ENCODE measurements at regions of chr12 and their contacts with region 1.

Region 1: GRCh38 chr12:44015335-44015941 is 179.6 kb downstream of the TMEM117 start:
- DNase-seq: no peak
- H3K4me3 Mint-ChIP-seq: no peak overlapping the region
- H3K27ac Mint-ChIP-seq: no peak overlapping the region
- H3K4me1 Mint-ChIP-seq: no peaks in the 10 kb centered on the region
- H3K27me3 Mint-ChIP-seq: no peaks in the 10 kb centered on the region

Region 2: GRCh38 chr12:42552822-42553221 is 1462.6 kb before region 1 on chr12:
- CTCF ChIA-PET with region 1: no interaction called
- intact Hi-C with region 1: no loop called
- DNase-seq: no peak
- H3K4me3 Mint-ChIP-seq: no peak overlapping the region
- H3K27ac Mint-ChIP-seq: no peak overlapping the region
- H3K4me1 Mint-ChIP-seq: no peaks in the 10 kb centered on the region
- H3K27me3 Mint-ChIP-seq: peaks cover 8% of the 10 kb centered on the region

Region 3: DNA sequence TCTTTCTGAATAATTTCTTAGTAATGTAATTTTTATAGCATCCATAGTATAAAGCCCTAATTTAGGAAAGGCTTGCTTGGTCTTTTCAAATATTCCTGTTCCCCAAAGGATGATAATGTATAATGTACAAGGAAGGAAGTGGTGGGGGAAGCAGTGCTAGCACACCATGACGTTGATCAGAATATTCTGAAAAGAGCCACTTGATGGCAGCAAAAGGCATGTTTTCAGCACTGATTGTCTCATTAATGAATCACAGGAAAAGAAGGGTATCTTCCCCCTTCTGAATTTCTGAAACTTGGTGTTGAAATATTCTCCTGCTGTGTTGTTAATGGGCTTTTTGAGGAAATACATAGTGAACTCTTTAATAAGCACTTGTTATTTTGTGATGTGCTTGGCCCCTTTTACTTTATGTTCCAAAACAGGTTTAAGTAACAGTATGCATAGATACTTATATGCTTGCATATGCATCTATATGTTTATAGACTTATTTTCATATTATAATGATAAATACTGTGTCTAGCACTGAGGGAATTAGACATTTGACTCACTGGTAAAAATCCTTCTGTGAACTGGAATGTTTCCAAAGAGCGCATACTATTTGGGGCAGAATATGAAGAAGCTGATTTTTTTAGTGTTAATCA is 57.6 kb before region 1 on chr12:
- CTCF ChIA-PET with region 1: interaction called, 7 read pairs
- intact Hi-C with region 1: loop called (anchors 1 kb)
- DNase-seq: peak; percentile 54
- H3K4me3 Mint-ChIP-seq: no peak overlapping the region
- H3K27ac Mint-ChIP-seq: no peak overlapping the region
- H3K4me1 Mint-ChIP-seq: peaks cover 2% of the 10 kb centered on the region
- H3K27me3 Mint-ChIP-seq: no peaks in the 10 kb centered on the region

Region 4: GRCh38 chr12:44509471-44509870 is 494.0 kb after region 1 on chr12:
- CTCF ChIA-PET with region 1: no interaction called
- intact Hi-C with region 1: loop called (anchors 10 kb)
- DNase-seq: no peak
- H3K4me3 Mint-ChIP-seq: no peak overlapping the region
- H3K27ac Mint-ChIP-seq: no peak overlapping the region
- H3K4me1 Mint-ChIP-seq: peaks cover 2% of the 10 kb centered on the region
- H3K27me3 Mint-ChIP-seq: no peaks in the 10 kb centered on the region

Region 5: DNA sequence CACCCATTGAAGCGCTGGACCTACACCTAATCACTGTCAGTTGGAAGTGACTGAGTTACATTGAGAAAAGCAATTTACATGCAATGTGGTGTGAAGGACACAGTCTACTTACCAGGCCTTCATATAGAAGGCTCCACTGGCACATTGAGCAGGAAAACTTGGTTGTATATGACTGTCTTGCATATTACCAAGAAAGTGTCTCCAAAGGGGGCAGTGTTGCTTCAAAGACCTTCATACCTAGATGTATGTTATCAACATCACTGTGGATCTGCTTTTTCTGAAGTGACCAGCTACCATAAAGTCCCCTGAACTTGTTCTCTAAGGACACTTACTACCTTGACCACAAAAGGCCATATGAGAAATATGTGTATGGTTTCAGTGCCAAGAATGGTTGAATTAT is 796.6 kb after region 1 on chr12:
- CTCF ChIA-PET with region 1: no interaction called
- intact Hi-C with region 1: loop called (anchors 2 kb)
- DNase-seq: peak; percentile 67
- H3K4me3 Mint-ChIP-seq: no peak overlapping the region
- H3K27ac Mint-ChIP-seq: peak overlapping the region; percentile 71
- H3K4me1 Mint-ChIP-seq: peaks cover 42% of the 10 kb centered on the region
- H3K27me3 Mint-ChIP-seq: no peaks in the 10 kb centered on the region

Region 6: GRCh38 chr12:44947163-44947562 is 931.7 kb after region 1 on chr12:
- CTCF ChIA-PET with region 1: interaction called, 8 read pairs
- intact Hi-C with region 1: loop called (anchors 5 kb)
- DNase-seq: no peak
- H3K4me3 Mint-ChIP-seq: no peak overlapping the region
- H3K27ac Mint-ChIP-seq: no peak overlapping the region
- H3K4me1 Mint-ChIP-seq: peaks cover 2% of the 10 kb centered on the region
- H3K27me3 Mint-ChIP-seq: peaks cover 4% of the 10 kb centered on the region